Head of caudate nucleus (tissue), 42 donors: ENCODE measurements at regions of chr2 and their contacts with region 1.

Region 1: GRCh38 chr2:104434318-104434797 is 419.6 kb upstream of the POU3F3 start:
- DNase-seq: peak in 40 of 42 donors; percentile 28 to 78 (median 58)

Region 2: GRCh38 chr2:104849618-104850141 is 415.3 kb after region 1 on chr2:
- intact Hi-C with region 1: loop called (anchors 5 kb)
- DNase-seq: peak in 41 of 42 donors; percentile 79 to 96 (median 91)